PC-9 (cell line): ENCODE measurements at regions of chr2 and their contacts with region 1.

Region 1: GRCh38 chr2:32063310-32064161 is at the start of gene SPAST:
- DNase-seq: peak; percentile 91 to 97
- H3K4me3 ChIP-seq: peak within 1 kb of the TSS; percentile 82
- H3K27ac ChIP-seq: peak within 1 kb of the TSS; percentile 70
- H3K4me1 ChIP-seq: peaks cover 23% of the 10 kb centered on the region
- H3K27me3 ChIP-seq: no peaks in the 10 kb centered on the region
- CTCF ChIP-seq: 0 out of 2 replicates have a peak, but pooled peaks have one; percentile 38
- total RNA-seq, gene SPAST: 17.2 and 19.2 TPM in 2 replicates

Region 2: DNA sequence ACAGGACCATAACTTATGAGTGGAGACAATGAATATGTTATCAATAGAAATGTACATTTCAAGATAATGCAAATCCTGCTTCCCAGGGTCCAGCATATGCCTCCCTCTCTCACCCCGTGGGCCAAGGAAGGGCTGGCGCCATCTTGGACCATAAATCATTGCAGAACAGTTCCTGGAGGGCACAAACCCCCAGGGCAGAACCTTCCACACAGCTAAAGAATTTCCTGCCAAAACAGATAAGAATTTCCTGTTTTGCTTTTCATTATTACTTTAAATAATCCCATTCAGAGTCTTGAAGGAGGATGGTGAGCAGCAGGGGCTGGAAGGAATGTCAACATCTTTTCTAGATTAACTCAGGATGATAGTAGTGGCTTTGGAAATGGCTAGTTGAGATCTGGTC is 775.9 kb before region 1 on chr2:
- CTCF ChIA-PET with region 1: no interaction called
- POLR2A ChIA-PET with region 1: interaction called, 14 read pairs
- intact Hi-C with region 1: no loop called
- DNase-seq: no peak
- H3K4me3 ChIP-seq: no peak overlapping the region
- H3K27ac ChIP-seq: no peak overlapping the region
- H3K4me1 ChIP-seq: peaks cover 7% of the 10 kb centered on the region; the same call in 1 of the 2 replicates
- H3K27me3 ChIP-seq: no peaks in the 10 kb centered on the region
- CTCF ChIP-seq: no peak

Region 3: GRCh38 chr2:31297751-31298150 is 765.8 kb before region 1 on chr2:
- CTCF ChIA-PET with region 1: no interaction called
- POLR2A ChIA-PET with region 1: no interaction called
- intact Hi-C with region 1: no loop called
- DNase-seq: peak in 1 of 2 experiments; percentile 56
- H3K4me3 ChIP-seq: no peak overlapping the region
- H3K27ac ChIP-seq: no peak overlapping the region
- H3K4me1 ChIP-seq: no peaks in the 10 kb centered on the region
- H3K27me3 ChIP-seq: no peaks in the 10 kb centered on the region
- CTCF ChIP-seq: no peak

Region 4: DNA sequence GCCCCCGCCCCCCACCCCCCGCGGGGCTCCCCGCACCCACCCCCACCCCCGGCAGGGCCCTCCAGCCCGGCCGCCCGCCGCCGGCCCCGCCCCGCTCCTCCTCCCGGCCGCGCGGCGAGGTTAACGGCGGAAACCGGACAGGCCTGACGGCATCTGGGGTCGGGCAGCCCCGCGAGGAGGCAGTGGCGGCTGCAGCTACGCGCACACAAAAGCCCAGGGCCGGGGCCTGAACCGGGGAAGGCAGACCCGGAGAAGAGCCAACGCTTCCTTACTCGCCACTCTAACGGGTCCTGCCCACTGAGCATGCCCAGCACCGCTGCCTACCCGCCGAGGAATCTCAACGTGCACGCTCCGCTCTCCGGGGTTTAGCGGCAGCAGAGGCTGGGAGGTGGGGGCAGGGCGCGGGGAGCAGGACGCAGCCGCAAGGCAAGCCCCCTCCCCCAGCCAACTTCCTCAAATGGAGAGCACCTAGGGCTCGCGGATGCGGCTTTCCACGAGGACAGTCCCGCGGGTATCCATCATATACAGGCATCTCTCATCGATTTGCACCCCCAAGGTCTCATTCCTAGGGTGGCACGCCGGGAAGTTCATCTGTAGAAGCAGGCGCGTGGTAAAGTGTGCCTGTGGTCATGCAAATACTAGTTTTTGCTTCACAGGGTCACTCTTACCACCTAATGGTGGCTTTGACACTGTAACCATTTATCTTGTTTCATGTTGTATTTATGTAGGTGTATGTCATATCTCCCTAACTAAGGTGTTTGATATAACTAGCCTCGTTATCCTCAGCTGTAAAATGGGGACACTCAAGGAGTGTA is 52.7 kb before region 1 on chr2 and contains the start of gene MEMO1:
- CTCF ChIA-PET with region 1: no interaction called
- POLR2A ChIA-PET with region 1: interaction called, 3 read pairs
- intact Hi-C with region 1: loop called (anchors 1 kb)
- DNase-seq: peak; percentile 86 to 91
- H3K4me3 ChIP-seq: peak within 1 kb of the TSS; percentile 100
- H3K27ac ChIP-seq: peak within 1 kb of the TSS; percentile 74
- H3K4me1 ChIP-seq: peaks cover 34% of the 10 kb centered on the region
- H3K27me3 ChIP-seq: no peaks in the 10 kb centered on the region
- CTCF ChIP-seq: no peak
- total RNA-seq, gene MEMO1: 29.5 and 40.2 TPM in 2 replicates

Region 5: GRCh38 chr2:32039447-32040219 is 23.9 kb before region 1 on chr2 and contains the start of gene DPY30:
- CTCF ChIA-PET with region 1: interaction called, 5 read pairs
- POLR2A ChIA-PET with region 1: interaction called, 11 read pairs
- intact Hi-C with region 1: loop called (anchors 1 kb)
- DNase-seq: peak; percentile 88 to 90
- H3K4me3 ChIP-seq: peak within 1 kb of the TSS; percentile 70
- H3K27ac ChIP-seq: peak within 1 kb of the TSS; percentile 70
- H3K4me1 ChIP-seq: no peaks in the 10 kb centered on the region; the same call in none of the 2 replicates
- H3K27me3 ChIP-seq: no peaks in the 10 kb centered on the region
- CTCF ChIP-seq: no peak
- total RNA-seq, gene DPY30: 89.6 and 109 TPM in 2 replicates

Region 6: DNA sequence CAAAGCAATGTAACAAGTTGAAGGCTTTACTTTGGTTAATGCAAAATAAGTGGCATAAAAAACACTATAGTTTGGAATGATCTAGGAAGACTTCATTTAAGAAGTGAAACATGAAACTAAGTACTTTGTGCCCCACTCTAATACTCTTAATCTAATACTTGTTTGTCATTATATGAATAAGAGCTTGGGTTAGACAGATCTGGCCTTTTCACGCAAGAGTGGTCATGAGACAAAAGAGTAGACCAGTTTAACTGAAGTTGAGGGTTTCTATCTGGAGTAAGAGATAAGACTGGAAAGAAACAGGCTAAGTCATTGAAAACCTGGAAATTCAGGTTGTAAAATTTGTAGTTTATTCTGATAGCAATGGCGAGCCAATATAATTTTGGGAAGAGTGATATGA is 105.0 kb after region 1 on chr2:
- CTCF ChIA-PET with region 1: no interaction called
- POLR2A ChIA-PET with region 1: no interaction called
- intact Hi-C with region 1: loop called (anchors 1 kb)
- DNase-seq: no peak
- H3K4me3 ChIP-seq: no peak overlapping the region
- H3K27ac ChIP-seq: no peak overlapping the region
- H3K4me1 ChIP-seq: peaks cover 19% of the 10 kb centered on the region
- H3K27me3 ChIP-seq: no peaks in the 10 kb centered on the region
- CTCF ChIP-seq: no peak

Region 7: GRCh38 chr2:32356735-32357644 is 293.5 kb after region 1 on chr2 and contains the start of gene BIRC6:
- CTCF ChIA-PET with region 1: no interaction called
- POLR2A ChIA-PET with region 1: interaction called, 3 read pairs
- intact Hi-C with region 1: loop called (anchors 5 kb)
- DNase-seq: peak; percentile 89 to 98
- H3K4me3 ChIP-seq: peak within 1 kb of the TSS; percentile 98
- H3K27ac ChIP-seq: peak within 1 kb of the TSS; percentile 75
- H3K4me1 ChIP-seq: peaks cover 12% of the 10 kb centered on the region
- H3K27me3 ChIP-seq: no peaks in the 10 kb centered on the region
- CTCF ChIP-seq: no peak
- total RNA-seq, gene BIRC6: 69.6 and 79.0 TPM in 2 replicates

Region 8: GRCh38 chr2:33395655-33396249 is 1332.2 kb after region 1 on chr2:
- CTCF ChIA-PET with region 1: interaction called, 12 read pairs
- POLR2A ChIA-PET with region 1: no interaction called
- intact Hi-C with region 1: no loop called
- DNase-seq: peak in 1 of 2 experiments; percentile 53
- H3K4me3 ChIP-seq: no peak overlapping the region
- H3K27ac ChIP-seq: no peak overlapping the region
- H3K4me1 ChIP-seq: no peaks in the 10 kb centered on the region
- H3K27me3 ChIP-seq: no peaks in the 10 kb centered on the region
- CTCF ChIP-seq: peak; percentile 82